Endothelial cell of umbilical vein (primary cell): ENCODE measurements at regions of chr9 and their contacts with region 1.

Region 1: DNA sequence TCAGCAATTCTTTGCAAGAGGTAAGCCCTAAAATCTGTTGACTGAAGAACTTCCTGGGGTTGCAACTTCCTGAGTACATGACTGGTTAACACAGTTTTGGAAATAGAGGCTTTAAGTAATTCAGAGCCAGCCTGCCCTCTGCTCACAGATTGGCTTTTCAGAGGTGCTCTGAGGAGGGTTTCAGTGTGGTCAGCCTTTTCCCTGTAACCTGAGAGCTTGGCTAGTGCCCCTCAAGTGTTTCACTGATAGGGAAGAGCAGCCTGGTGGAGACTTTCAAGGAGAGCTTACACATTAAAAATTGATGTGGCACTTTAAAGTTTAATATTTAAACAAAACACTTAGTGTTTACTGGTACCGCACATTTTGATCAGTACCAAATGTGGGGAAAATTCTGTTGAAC is 56.7 kb upstream of the FOXB2 start:
- DNase-seq: no peak
- H3K4me3 ChIP-seq: no peak overlapping the region
- H3K27ac ChIP-seq: no peak overlapping the region
- H3K4me1 ChIP-seq: no peaks in the 10 kb centered on the region
- H3K27me3 ChIP-seq: peaks cover 0 to 1% of the 10 kb centered on the region in 2 experiments
- CTCF ChIP-seq: no peak
- POLR2A ChIP-seq: no peak

Region 2: GRCh38 chr9:77020438-77021290 is 57.9 kb after region 1 on chr9:
- CTCF ChIA-PET with region 1: no interaction called
- POLR2A ChIA-PET with region 1: interaction called, 10 read pairs
- dilution Hi-C with region 1: no loop called
- intact Hi-C with region 1: no loop called
- DNase-seq: no peak
- H3K4me3 ChIP-seq: no peak overlapping the region
- H3K27ac ChIP-seq: no peak overlapping the region
- H3K4me1 ChIP-seq: no peaks in the 10 kb centered on the region
- H3K27me3 ChIP-seq: peaks cover 90 to 97% of the 10 kb centered on the region in 2 experiments
- CTCF ChIP-seq: no peak
- POLR2A ChIP-seq: no peak

Region 3: GRCh38 chr9:78035383-78035993 is 1072.8 kb after region 1 on chr9:
- CTCF ChIA-PET with region 1: no interaction called
- POLR2A ChIA-PET with region 1: no interaction called
- dilution Hi-C with region 1: no loop called
- intact Hi-C with region 1: no loop called
- DNase-seq: peak; percentile 88
- H3K4me3 ChIP-seq: no peak overlapping the region
- H3K27ac ChIP-seq: no peak overlapping the region
- H3K4me1 ChIP-seq: peaks cover 38% of the 10 kb centered on the region
- H3K27me3 ChIP-seq: no peaks in the 10 kb centered on the region
- CTCF ChIP-seq: peak; percentile 69 to 74
- POLR2A ChIP-seq: no peak